Activated T-helper 2 cell treated with anti-CD3 and anti-CD28 coated beads, Interferon-gamma antibody, Interleukin-2, Interleukin-4, amounts not matched to agents 10 μg/mL and 5 μg/mL and 100 μg/mL, durations not matched to agents 14 hours and 24 hours and 36 hours (primary cell): ENCODE measurements at regions of chr11 and their contacts with region 1.

Region 1: DNA sequence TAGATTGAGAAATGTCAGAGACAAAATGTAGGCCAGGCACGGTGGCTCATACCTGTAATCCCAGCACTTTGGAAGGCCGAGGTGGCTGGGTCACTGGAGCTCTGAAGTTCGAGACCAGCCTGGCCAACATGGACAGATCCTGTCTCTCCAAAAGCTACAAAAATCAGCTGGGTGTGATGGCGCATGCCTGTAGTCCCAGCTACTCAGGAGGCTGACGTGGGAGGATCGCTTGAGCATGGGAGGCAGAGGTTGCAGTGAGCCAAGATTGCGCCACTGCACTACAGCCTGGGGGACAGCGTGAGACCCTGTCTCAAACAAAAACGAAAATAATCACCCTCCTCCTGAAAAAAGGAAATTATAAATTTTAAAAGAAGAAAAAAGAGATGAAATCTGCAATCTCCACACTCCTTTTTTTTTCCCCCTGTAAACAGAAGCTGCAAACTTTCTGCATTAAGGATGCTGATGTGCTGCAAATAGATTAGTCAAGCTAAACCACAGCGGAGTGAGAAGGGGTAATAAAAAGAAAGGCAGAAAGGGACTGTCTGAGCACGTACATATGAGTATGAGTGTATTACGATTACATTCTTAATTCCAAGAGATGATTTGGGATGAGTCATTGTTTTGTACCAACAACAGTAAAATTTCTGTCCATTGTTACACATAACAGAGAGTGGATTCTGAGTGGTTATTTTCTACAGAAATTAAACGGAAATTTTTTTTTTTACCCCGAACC is 87.3 kb downstream of the SIK3 start:
- DNase-seq: no peak
- H3K4me3 Mint-ChIP-seq: no peak overlapping the region
- H3K27ac Mint-ChIP-seq: peak overlapping the region; percentile 74
- H3K4me1 Mint-ChIP-seq: peaks cover 35% of the 10 kb centered on the region
- H3K27me3 Mint-ChIP-seq: no peaks in the 10 kb centered on the region

Region 2: GRCh38 chr11:116986521-116987105 is 24.4 kb before region 1 on chr11:
- intact Hi-C with region 1: loop called (anchors 1 kb)
- DNase-seq: no peak
- H3K4me3 Mint-ChIP-seq: peak overlapping the region; percentile 49
- H3K27ac Mint-ChIP-seq: peak overlapping the region; percentile 80
- H3K4me1 Mint-ChIP-seq: peaks cover 56% of the 10 kb centered on the region
- H3K27me3 Mint-ChIP-seq: no peaks in the 10 kb centered on the region

Region 3: GRCh38 chr11:117092951-117093590 is 82.1 kb after region 1 on chr11:
- intact Hi-C with region 1: no loop called
- DNase-seq: no peak
- H3K4me3 Mint-ChIP-seq: no peak overlapping the region
- H3K27ac Mint-ChIP-seq: peak overlapping the region; percentile 67
- H3K4me1 Mint-ChIP-seq: peaks cover 70% of the 10 kb centered on the region
- H3K27me3 Mint-ChIP-seq: no peaks in the 10 kb centered on the region